Activated naive CD4-positive, alpha-beta T cell treated with anti-CD3 and anti-CD28 coated beads for 36 hours (primary cell): ENCODE measurements at regions of chr14 and their contacts with region 1.

Region 1: GRCh38 chr14:58107947-58108552 is 44.0 kb downstream of the ARMH4 start:
- DNase-seq: peak; percentile 65
- H3K4me3 Mint-ChIP-seq: no peak overlapping the region
- H3K27ac Mint-ChIP-seq: no peak overlapping the region
- H3K4me1 Mint-ChIP-seq: peaks cover 5% of the 10 kb centered on the region
- H3K27me3 Mint-ChIP-seq: peaks cover 7% of the 10 kb centered on the region

Region 2: DNA sequence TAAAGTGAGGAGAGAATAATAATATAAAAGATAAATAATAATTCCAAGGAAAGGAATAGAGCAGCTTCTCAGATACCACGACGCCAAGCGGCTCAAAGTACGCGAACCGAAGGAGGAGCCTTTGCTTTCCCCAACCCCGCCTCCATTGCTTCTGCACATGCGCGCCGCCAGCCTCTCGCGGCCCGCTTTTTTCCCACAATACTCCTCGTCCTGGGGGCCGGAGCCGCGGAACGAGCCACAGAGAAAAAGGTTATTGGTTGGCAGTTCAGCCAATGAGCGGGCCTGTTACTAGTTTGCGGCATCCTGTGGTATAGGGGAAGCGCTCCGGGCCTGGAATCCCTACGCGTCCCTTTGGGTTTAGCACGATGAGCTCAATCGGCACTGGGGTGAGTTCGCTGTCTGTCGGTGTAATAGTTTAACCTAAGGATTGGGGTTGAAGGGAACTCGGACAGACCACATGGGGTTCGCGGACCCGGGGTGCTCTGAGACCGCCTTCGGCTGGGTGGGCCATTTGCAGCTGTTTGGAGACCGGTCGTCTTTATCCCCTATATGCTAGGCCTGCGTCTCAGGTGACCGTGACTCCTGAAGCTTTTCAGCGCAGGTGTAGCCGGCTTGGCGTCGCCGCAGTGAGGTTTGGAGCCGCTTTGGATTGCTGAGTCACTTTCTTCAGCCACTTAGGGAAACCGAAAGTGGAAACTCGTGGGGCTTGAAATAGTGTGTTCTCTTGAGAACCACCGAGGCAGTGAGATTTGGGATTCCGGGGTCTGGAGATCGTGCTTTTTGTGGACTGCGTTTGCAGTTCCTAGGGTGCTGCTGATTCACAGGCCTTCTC is 136.7 kb after region 1 on chr14 and contains the start of gene PSMA3:
- CTCF ChIA-PET with region 1: no interaction called
- intact Hi-C with region 1: loop called (anchors 1 kb)
- DNase-seq: peak; percentile 99
- H3K4me3 Mint-ChIP-seq: peak within 1 kb of the TSS; percentile 98
- H3K27ac Mint-ChIP-seq: peak within 1 kb of the TSS; percentile 99
- H3K4me1 Mint-ChIP-seq: peaks cover 43% of the 10 kb centered on the region
- H3K27me3 Mint-ChIP-seq: no peaks in the 10 kb centered on the region
- total RNA-seq, gene PSMA3: 399 to 424 TPM

Region 3: DNA sequence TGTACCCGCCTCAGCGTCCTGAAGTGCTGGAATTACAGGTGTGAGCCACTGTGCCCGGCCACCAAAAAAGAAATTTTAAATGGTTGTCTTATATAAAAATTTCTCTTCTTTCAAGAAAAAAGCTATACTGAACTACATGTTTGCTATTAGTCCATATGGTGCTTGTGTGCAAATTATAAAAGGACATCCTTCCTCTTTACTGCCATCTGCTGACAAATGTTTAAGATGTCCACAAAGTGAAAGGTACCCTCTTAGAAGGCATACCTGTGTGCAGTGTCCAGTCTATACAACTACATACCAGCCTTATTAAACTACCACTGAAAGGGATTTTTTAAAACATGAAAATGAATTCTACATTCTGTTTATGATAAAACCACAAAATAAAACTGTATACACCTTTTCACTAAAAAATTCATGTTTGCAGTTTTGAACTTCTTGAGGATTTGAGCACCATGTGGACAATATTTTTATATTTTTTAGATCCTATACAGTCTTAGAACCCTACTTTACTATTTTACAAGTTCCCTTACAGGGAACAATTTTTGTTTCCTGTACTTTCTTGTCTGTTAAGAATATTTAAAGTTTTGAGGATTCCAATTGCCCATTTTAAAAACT is 254.9 kb after region 1 on chr14:
- CTCF ChIA-PET with region 1: no interaction called
- intact Hi-C with region 1: loop called (anchors 1 kb)
- DNase-seq: no peak
- H3K4me3 Mint-ChIP-seq: no peak overlapping the region
- H3K27ac Mint-ChIP-seq: no peak overlapping the region
- H3K4me1 Mint-ChIP-seq: peaks cover 2% of the 10 kb centered on the region
- H3K27me3 Mint-ChIP-seq: no peaks in the 10 kb centered on the region

Region 4: DNA sequence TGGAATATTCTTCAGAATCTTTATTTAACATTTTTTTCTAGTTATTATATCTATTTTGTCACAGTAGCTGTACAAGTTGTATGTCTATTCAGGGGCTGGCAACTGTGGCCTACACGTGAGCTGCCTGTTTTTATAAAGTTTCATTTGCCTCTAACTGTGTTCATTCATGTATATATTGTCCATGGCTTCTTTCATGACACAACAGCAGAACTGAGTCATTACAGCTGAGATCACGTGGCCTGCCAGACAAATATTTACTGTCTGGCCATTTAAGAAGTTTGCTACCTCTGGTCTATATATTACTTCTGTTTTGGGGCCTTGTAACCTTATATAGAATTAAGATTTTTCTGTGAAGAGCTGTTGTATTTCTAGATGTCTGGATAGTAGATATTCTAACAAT is 357.4 kb after region 1 on chr14:
- CTCF ChIA-PET with region 1: no interaction called
- intact Hi-C with region 1: loop called (anchors 10 kb)
- DNase-seq: no peak
- H3K4me3 Mint-ChIP-seq: no peak overlapping the region
- H3K27ac Mint-ChIP-seq: no peak overlapping the region
- H3K4me1 Mint-ChIP-seq: no peaks in the 10 kb centered on the region
- H3K27me3 Mint-ChIP-seq: no peaks in the 10 kb centered on the region